Activated T-helper 2 cell treated with anti-CD3 and anti-CD28 coated beads, Interferon-gamma antibody, Interleukin-2, Interleukin-4, amounts not matched to agents 10 μg/mL and 5 μg/mL and 100 μg/mL, durations not matched to agents 14 hours and 24 hours and 36 hours (primary cell): ENCODE measurements at regions of chr19 and their contacts with region 1.

Region 1: GRCh38 chr19:16143399-16144245 is at the start of gene HSH2D:
- DNase-seq: peak; percentile 79
- H3K4me3 Mint-ChIP-seq: peak within 1 kb of the TSS; percentile 99
- H3K27ac Mint-ChIP-seq: peak within 1 kb of the TSS; percentile 96
- H3K4me1 Mint-ChIP-seq: peaks cover 40% of the 10 kb centered on the region
- H3K27me3 Mint-ChIP-seq: no peaks in the 10 kb centered on the region
- total RNA-seq, gene HSH2D: 42.3 and 43.5 TPM in 2 replicates

Region 2: GRCh38 chr19:16118489-16119033 is 25.1 kb before region 1 on chr19:
- intact Hi-C with region 1: loop called (anchors 2 kb)
- DNase-seq: peak; percentile 45
- H3K4me3 Mint-ChIP-seq: peak overlapping the region; percentile 72
- H3K27ac Mint-ChIP-seq: peak overlapping the region; percentile 95
- H3K4me1 Mint-ChIP-seq: peaks cover 54% of the 10 kb centered on the region
- H3K27me3 Mint-ChIP-seq: no peaks in the 10 kb centered on the region

Region 3: GRCh38 chr19:16259385-16260159 is 116.0 kb after region 1 on chr19:
- intact Hi-C with region 1: no loop called
- DNase-seq: no peak
- H3K4me3 Mint-ChIP-seq: no peak overlapping the region
- H3K27ac Mint-ChIP-seq: no peak overlapping the region
- H3K4me1 Mint-ChIP-seq: peaks cover 32% of the 10 kb centered on the region
- H3K27me3 Mint-ChIP-seq: peaks cover 12% of the 10 kb centered on the region